Activated CD4-positive, alpha-beta T cell treated with anti-CD3 and anti-CD28 coated beads, Interleukin-2, amount 10 ng/mL, durations not matched to agents 24 days and 14 days (primary cell): ENCODE measurements at regions of chr5 and their contacts with region 1.

Region 1: DNA sequence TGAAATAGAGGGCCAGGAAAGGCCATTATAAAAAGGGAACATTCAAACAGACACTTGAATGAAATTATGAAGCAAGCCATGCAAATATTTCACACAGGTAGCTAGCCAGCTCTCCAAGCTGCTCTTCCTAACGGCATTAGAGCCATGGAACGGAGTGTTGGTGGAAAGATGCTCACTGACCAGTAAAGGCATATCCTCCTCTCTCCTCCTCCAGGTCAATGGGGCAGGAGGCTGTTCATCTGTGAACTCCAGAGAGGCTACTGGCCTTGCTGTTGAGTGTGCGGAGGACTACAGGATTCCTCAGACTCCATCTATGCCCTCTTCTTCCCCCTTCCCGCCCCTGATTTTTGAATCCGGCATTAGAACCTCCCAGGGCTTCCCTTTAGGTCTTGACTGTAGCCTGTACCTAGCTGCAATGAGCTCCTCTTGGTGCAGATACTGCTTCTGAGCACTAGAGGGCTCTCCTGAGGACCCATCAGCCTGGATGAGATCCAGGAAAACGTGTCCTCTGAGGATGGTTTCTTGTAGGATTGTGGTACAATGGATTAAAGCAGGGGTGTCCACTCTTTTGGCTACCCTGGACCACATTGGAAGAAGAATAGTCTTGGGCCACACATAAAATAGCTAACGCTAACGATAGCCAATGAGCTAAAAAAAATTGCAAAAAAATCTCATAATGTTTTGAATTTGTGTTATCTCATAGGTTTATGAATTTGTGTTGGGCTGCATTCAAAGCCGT is 162.2 kb downstream of the SREK1 start:
- DNase-seq: peak; percentile 78
- H3K4me3 Mint-ChIP-seq: no peak overlapping the region
- H3K27ac Mint-ChIP-seq: no peak overlapping the region
- H3K4me1 Mint-ChIP-seq: peaks cover 4% of the 10 kb centered on the region
- H3K27me3 Mint-ChIP-seq: peaks cover 15% of the 10 kb centered on the region

Region 2: GRCh38 chr5:66498791-66499207 is 192.5 kb after region 1 on chr5:
- intact Hi-C with region 1: loop called (anchors 10 kb)
- DNase-seq: no peak
- H3K4me3 Mint-ChIP-seq: no peak overlapping the region
- H3K27ac Mint-ChIP-seq: no peak overlapping the region
- H3K4me1 Mint-ChIP-seq: no peaks in the 10 kb centered on the region
- H3K27me3 Mint-ChIP-seq: peaks cover 6% of the 10 kb centered on the region

Region 3: DNA sequence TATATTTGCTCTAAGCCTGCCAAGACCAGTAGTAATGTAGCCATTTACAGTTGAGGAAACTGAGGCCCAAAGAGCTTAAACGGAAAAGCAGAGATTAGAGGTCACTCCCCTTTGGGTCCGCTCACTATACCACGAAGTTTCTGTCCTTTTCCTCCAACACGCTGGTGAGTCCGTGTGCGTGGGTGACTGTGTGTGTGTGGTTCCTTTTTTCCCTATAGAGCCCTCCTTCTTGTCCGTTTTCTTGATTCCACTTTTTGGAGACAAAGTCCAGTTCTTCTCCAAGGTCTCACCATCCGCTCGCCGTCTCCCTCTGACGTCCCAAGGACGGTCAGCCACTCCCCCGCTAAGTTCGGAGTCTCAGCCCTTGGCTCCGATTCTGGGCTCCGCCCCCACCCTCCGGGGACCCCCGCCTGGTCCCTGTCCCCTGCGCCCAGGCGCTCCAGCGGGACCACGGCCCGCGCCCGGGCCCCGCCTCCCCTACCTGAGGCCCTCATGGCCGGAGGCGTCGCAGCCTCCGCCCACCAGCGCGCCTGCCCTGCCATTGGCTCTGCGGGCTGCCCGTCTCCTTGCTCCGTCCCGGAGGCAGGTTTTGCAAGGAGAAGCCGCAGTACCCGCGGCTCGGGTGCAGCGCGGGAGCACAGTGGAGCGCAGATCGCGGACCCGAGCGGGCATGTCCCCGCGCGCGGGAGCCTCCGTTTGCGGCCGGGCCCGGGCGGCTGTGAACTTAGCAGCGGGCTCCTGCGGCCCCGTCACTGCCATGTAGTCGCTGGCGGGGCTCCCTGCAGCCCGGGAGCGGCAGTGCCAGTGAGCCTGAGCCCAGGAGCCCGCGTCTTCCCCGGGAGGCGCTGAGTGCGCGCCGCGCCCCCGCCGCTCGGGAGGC is 289.7 kb after region 1 on chr5 and contains the start of gene MAST4:
- intact Hi-C with region 1: loop called (anchors 5 kb)
- DNase-seq: peak; percentile 94
- H3K4me3 Mint-ChIP-seq: peak within 1 kb of the TSS; percentile 88
- H3K27ac Mint-ChIP-seq: peak within 1 kb of the TSS; percentile 2
- H3K4me1 Mint-ChIP-seq: peaks cover 25% of the 10 kb centered on the region
- H3K27me3 Mint-ChIP-seq: peaks cover 71% of the 10 kb centered on the region
- total RNA-seq, gene MAST4: 16.1 and 18.3 TPM in 2 replicates

Region 4: DNA sequence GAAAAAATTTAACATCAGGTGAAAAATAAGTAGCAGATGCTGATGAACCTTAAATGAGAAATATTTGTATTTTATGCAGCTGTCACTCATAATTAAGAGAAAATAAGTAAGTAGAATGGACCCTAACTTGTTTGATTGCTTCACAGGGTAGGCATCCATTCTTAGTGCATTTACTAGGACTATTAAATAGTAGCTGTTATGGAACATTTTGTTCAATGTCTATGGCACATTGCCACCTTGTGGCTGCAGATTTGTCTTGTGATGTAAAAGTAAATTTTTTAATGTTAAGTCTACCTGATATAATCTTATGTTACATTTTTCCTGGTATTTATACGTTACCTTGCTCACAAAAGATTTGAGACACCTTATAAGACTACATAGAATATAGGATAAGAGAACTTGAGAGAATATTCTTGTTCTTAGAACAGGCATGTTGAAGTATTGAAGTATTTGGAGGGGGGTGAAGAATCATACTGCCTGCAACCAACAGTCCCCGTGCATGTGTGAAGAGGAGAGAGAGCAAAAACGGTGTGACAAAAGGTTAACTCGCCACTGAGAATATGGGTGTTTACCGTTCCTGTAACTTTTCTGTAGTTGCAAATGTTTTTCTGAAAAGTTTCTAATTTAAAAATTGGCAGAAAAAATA is 451.0 kb after region 1 on chr5:
- intact Hi-C with region 1: loop called (anchors 1 kb)
- DNase-seq: peak; percentile 74
- H3K4me3 Mint-ChIP-seq: no peak overlapping the region
- H3K27ac Mint-ChIP-seq: no peak overlapping the region
- H3K4me1 Mint-ChIP-seq: no peaks in the 10 kb centered on the region
- H3K27me3 Mint-ChIP-seq: peaks cover 40% of the 10 kb centered on the region

Region 5: DNA sequence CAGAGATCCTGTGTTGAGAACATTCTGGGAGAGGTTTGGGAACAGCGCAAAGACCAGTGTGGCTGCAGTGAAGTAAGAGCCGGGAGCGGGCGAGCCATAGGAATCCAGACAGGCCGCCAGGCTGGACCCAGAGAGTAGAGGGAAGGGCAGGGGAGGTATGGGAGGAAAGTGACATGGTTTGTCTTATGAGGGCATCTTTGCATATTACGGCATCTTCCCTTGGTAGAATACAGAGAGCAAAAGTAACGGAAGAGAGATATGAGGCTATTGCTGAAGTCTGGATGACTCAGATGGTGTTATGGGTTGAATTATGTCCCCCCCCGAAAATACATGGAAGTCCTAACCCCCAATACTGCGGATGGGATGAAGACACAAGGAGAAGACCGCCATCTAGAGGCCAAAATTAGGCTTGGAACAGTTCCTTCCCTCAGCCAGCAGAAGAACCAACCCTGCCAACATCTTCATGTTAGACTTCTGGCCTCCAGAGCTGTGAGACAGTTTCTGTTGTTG is 558.1 kb after region 1 on chr5:
- intact Hi-C with region 1: loop called (anchors 1 kb)
- DNase-seq: peak; percentile 79
- H3K4me3 Mint-ChIP-seq: no peak overlapping the region
- H3K27ac Mint-ChIP-seq: peak overlapping the region; percentile 3
- H3K4me1 Mint-ChIP-seq: peaks cover 29% of the 10 kb centered on the region
- H3K27me3 Mint-ChIP-seq: peaks cover 6% of the 10 kb centered on the region

Region 6: GRCh38 chr5:67142816-67143215 is 836.5 kb after region 1 on chr5:
- intact Hi-C with region 1: loop called (anchors 5 kb)
- DNase-seq: no peak
- H3K4me3 Mint-ChIP-seq: no peak overlapping the region
- H3K27ac Mint-ChIP-seq: no peak overlapping the region
- H3K4me1 Mint-ChIP-seq: peaks cover 2% of the 10 kb centered on the region
- H3K27me3 Mint-ChIP-seq: no peaks in the 10 kb centered on the region